Tibial artery (tissue), 4 donors: ENCODE measurements at regions of chr6 and their contacts with region 1.

Region 1: GRCh38 chr6:129498950-129499842 is 210.8 kb downstream of the ARHGAP18 start:
- DNase-seq: peak in 1 of 2 donors; percentile 33
- H3K4me3 ChIP-seq: no peak overlapping the region
- H3K27ac ChIP-seq: no peak overlapping the region
- H3K4me1 ChIP-seq: peaks cover 0 to 8% (median 1%) of the 10 kb centered on the region in 4 donors
- H3K27me3 ChIP-seq: no peaks in the 10 kb centered on the region
- CTCF ChIP-seq: peak; percentile 44 to 58

Region 2: DNA sequence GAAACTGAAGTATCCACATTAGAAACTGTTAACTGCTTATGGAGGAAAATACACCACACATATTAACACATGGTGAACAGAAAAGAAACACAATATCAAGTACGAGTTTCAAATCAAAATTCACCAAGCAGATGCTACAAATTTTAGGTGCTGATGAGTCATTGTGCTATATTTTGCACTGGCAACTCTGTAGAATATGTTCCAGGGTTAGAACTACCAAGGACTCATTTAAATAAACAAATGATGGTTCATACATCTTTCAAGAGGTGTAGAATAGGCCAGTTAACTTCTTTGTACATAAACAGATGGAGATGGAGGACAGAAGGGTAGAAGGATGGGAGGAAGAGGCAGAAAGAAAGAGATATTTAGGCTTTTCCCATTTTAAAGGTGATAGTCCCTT is 25.9 kb after region 1 on chr6:
- intact Hi-C with region 1: no loop called
- DNase-seq: no peak
- H3K4me3 ChIP-seq: no peak overlapping the region
- H3K27ac ChIP-seq: no peak overlapping the region
- H3K4me1 ChIP-seq: no peaks in the 10 kb centered on the region
- H3K27me3 ChIP-seq: no peaks in the 10 kb centered on the region
- CTCF ChIP-seq: no peak

Region 3: DNA sequence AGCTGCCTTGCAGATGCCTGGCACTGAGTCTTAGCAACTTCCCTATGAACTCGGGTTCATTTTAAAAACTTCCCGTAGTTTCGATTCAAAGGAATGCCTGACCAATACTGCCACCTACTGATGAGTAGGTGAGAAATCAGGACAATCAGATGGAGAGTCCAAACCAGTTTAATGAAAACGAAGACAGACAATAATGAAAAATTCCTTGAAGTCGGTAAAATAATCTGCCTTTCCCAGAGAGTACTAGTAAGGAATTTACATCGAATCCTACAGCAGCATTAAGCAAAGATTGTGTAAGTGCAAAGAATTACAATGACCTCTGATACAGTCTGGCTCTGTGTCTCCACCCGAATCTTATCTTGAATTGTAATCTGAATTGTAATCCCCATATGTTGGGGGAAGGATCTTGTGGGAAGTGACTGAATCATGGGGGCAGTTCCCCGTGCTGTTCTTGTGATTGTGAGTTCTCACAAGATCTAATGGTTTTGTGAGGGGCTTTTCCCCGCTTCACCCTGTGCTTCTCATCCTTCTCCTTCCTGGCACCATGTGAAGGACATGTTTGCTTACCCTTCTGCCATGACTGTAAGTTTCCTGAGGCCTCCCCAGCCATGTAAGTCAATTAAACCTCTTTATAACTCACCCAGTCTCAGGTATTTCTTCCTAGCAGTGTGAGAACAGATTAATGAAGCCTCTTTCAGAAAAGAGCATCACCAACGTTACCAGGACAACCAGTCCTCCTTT is 76.4 kb after region 1 on chr6:
- intact Hi-C with region 1: loop called (anchors 5 kb)
- DNase-seq: no peak
- H3K4me3 ChIP-seq: peak overlapping the region; percentile 34 to 35
- H3K27ac ChIP-seq: no peak overlapping the region
- H3K4me1 ChIP-seq: peaks cover 0 to 3% (median 0%) of the 10 kb centered on the region in 4 donors
- H3K27me3 ChIP-seq: no peaks in the 10 kb centered on the region
- CTCF ChIP-seq: peak; percentile 54 to 60